ENCODE measurements at regions of chr19 and their contacts with region 1.

Region 1: DNA sequence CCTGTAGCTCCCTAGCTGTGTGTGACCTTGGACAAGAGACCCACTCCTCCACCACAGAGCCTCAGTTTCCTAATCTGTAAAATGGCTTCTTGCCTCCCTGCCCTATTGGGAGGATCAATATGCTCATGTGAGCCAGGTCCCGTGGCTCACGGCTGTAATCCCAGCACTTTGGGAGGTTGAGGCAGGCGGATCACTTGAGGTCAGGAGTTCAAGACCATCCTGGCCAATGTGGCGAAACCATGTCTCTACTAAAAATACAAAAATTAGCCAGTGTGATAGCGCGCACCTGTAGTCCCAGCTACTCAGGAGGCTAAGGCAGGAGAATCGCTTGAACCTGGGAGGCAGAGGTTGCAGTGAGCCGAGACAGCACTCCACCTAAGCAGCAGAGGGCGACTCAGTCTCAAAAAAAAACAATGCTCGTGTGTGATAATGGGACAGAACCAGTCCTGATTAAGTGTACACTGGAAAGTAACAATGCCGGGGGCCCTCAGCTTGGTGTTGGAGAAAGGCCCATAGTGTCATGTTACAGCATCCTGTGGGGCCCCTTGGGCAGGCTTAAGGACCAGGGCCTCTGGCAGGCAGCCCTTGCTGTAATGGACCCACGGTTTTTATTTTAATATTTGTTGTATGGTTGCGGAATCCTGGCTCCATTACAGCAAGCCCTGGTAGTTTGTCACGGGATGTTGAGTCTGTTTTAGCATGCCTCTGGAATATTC is 6.8 kb downstream of the RPS11 start:
- DNase-seq: peak in 1 of 10 donors; percentile 37
- H3K4me3 ChIP-seq: no peak overlapping the region
- H3K27ac ChIP-seq: no peak overlapping the region
- H3K27me3 ChIP-seq: no peaks in the 10 kb centered on the region
- CTCF ChIP-seq: peak in 53 of 56 donors; percentile 35 to 77 (median 57)

Region 2: GRCh38 chr19:49436369-49437017 is 66.5 kb before region 1 on chr19:
- intact Hi-C with region 1: no loop called
- DNase-seq: peak in 5 of 10 donors; percentile 35 to 80 (median 74)
- H3K4me3 ChIP-seq: peak overlapping the region in 46 of 59 donors; percentile 1 to 80 (median 38)
- H3K27ac ChIP-seq: peak overlapping the region in 18 of 59 donors; percentile 5 to 85 (median 36)
- H3K27me3 ChIP-seq: peaks cover 3 to 99% (median 68%) of the 10 kb centered on the region in 45 donors
- CTCF ChIP-seq: no peak

Region 3: GRCh38 chr19:49553451-49554271 is 50.6 kb after region 1 on chr19:
- intact Hi-C with region 1: loop called in 1 of 2 experiments (anchors 5 kb)
- DNase-seq: no peak
- H3K4me3 ChIP-seq: no peak overlapping the region
- H3K27ac ChIP-seq: peak overlapping the region in 28 of 59 donors; percentile 5 to 69 (median 43)
- H3K27me3 ChIP-seq: no peaks in the 10 kb centered on the region
- CTCF ChIP-seq: no peak

Region 4: GRCh38 chr19:49565261-49565660 is 62.2 kb after region 1 on chr19:
- intact Hi-C with region 1: no loop called
- DNase-seq: no peak
- H3K4me3 ChIP-seq: no peak overlapping the region
- H3K27ac ChIP-seq: no peak overlapping the region
- H3K27me3 ChIP-seq: no peaks in the 10 kb centered on the region
- CTCF ChIP-seq: no peak